Activated CD4-positive, alpha-beta T cell treated with anti-CD3 and anti-CD28 coated beads for 36 hours (primary cell): ENCODE measurements at regions of chr19 and their contacts with region 1.

Region 1: DNA sequence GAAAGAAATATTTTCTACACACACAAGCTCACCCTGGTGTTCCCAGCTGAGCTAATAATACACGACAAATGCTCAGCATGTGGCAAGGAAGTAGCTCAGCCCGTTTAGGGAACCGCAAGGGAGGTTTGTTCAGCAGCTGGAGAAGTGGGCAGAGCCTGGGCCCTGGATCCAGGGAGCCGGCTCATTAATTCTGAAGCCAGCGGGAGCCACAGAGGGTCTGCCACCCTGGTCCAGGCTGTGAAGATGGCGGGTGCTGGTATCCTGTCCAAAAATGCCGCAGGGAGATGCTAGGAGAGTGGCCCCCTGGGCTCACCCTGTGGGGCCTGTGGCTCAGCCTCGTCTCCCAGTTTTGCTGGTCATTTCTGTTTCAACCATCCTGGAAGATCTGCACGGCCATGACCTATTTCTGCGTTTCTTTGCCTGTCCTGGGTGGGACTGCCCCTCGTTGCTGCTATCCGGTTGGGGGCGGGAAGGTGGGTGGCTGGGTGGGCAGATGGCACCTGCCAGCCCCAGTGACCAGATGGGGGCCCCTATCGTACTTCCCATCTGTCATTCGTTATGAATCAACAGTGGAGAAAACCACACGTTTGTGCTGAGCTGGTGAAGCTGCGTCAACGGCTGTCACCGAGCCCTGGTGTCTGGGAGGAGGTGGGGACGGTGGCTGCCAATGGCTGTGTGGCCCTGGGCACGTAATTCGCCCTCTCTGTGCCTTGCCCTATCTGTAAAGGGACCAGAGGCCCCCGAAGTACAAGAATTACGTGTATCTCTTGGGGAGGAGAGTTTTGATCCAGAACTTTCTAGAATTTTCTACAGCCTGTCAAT is 2.7 kb upstream of the GNA15 start:
- DNase-seq: peak; percentile 96
- ATAC-seq: peak; percentile 98
- H3K4me3 Mint-ChIP-seq: peak overlapping the region; percentile 9
- H3K27ac Mint-ChIP-seq: peak overlapping the region; percentile 83
- H3K4me1 Mint-ChIP-seq: peaks cover 40% of the 10 kb centered on the region
- H3K27me3 Mint-ChIP-seq: peaks cover 3% of the 10 kb centered on the region

Region 2: GRCh38 chr19:2798733-2799132 is 334.4 kb before region 1 on chr19:
- CTCF ChIA-PET with region 1: no interaction called
- POLR2A ChIA-PET with region 1: no interaction called
- intact Hi-C with region 1: no loop called
- DNase-seq: no peak
- ATAC-seq: no peak
- H3K4me3 Mint-ChIP-seq: no peak overlapping the region
- H3K27ac Mint-ChIP-seq: no peak overlapping the region
- H3K4me1 Mint-ChIP-seq: no peaks in the 10 kb centered on the region
- H3K27me3 Mint-ChIP-seq: no peaks in the 10 kb centered on the region

Region 3: GRCh38 chr19:3146677-3147100 is 13.5 kb after region 1 on chr19:
- CTCF ChIA-PET with region 1: interaction called, 32 read pairs
- POLR2A ChIA-PET with region 1: interaction called, 5 read pairs
- intact Hi-C with region 1: loop called (anchors 1 kb)
- DNase-seq: peak; percentile 83
- ATAC-seq: peak; percentile 55
- H3K4me3 Mint-ChIP-seq: no peak overlapping the region
- H3K27ac Mint-ChIP-seq: no peak overlapping the region
- H3K4me1 Mint-ChIP-seq: peaks cover 20% of the 10 kb centered on the region
- H3K27me3 Mint-ChIP-seq: no peaks in the 10 kb centered on the region

Region 4: DNA sequence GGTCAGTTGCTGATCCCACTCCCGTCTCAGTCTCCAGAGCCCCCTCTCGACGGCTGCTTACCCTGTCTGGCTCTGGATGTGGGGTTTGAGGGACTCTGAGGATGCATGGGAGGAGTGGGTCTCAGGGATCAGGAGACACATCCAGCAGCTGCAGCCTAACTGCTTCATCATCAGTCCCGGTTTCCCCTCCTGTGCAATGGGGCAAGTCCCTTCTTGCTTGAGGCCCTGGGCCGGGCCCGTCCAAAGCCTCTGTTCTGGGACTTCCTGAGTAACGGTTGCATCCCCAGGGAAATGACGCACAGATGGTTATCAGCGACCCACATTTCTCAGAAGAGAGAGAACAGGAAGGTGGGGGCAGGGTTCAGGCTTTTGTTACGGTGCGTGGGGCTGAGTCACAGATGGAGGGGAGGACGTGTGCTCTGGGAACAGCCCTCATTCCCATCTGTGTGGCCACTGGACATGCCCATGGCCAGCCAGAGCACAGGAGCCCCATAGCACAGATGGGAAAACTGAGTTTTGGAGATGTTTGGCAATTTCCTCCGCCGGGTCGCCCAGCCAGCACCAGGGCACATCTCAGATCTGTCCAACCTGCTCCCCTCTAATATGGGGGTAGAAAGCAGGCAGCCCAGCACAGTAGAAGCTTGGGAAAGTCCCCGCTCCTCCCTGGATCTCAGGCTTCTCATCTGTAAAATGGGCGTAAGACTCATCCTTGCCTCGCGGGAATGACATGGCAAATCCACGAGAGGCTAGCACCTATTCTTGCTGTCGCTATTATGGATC is 22.0 kb after region 1 on chr19:
- CTCF ChIA-PET with region 1: interaction called, 3 read pairs
- POLR2A ChIA-PET with region 1: no interaction called
- intact Hi-C with region 1: loop called (anchors 1 kb)
- DNase-seq: peak; percentile 92
- ATAC-seq: peak; percentile 95
- H3K4me3 Mint-ChIP-seq: no peak overlapping the region
- H3K27ac Mint-ChIP-seq: no peak overlapping the region
- H3K4me1 Mint-ChIP-seq: peaks cover 4% of the 10 kb centered on the region
- H3K27me3 Mint-ChIP-seq: no peaks in the 10 kb centered on the region

Region 5: GRCh38 chr19:3163230-3163886 is 30.2 kb after region 1 on chr19:
- CTCF ChIA-PET with region 1: interaction called, 13 read pairs
- POLR2A ChIA-PET with region 1: no interaction called
- intact Hi-C with region 1: loop called (anchors 1 kb)
- DNase-seq: peak; percentile 82
- ATAC-seq: peak; percentile 82
- H3K4me3 Mint-ChIP-seq: no peak overlapping the region
- H3K27ac Mint-ChIP-seq: peak overlapping the region; percentile 42
- H3K4me1 Mint-ChIP-seq: peaks cover 23% of the 10 kb centered on the region
- H3K27me3 Mint-ChIP-seq: no peaks in the 10 kb centered on the region

Region 6: GRCh38 chr19:3423183-3423829 is 290.1 kb after region 1 on chr19:
- CTCF ChIA-PET with region 1: no interaction called
- POLR2A ChIA-PET with region 1: no interaction called
- intact Hi-C with region 1: no loop called
- DNase-seq: no peak
- ATAC-seq: no peak
- H3K4me3 Mint-ChIP-seq: no peak overlapping the region
- H3K27ac Mint-ChIP-seq: no peak overlapping the region
- H3K4me1 Mint-ChIP-seq: no peaks in the 10 kb centered on the region
- H3K27me3 Mint-ChIP-seq: no peaks in the 10 kb centered on the region

Region 7: GRCh38 chr19:3434712-3435553 is 301.8 kb after region 1 on chr19:
- CTCF ChIA-PET with region 1: no interaction called
- POLR2A ChIA-PET with region 1: no interaction called
- intact Hi-C with region 1: loop called in 1 of 2 experiments (anchors 1 kb)
- DNase-seq: peak; percentile 98
- ATAC-seq: peak; percentile 96
- H3K4me3 Mint-ChIP-seq: peak overlapping the region; percentile 84
- H3K27ac Mint-ChIP-seq: peak overlapping the region; percentile 99
- H3K4me1 Mint-ChIP-seq: peaks cover 13% of the 10 kb centered on the region
- H3K27me3 Mint-ChIP-seq: no peaks in the 10 kb centered on the region